Astrocyte of the cerebellum (primary cell): ENCODE measurements at regions of chr7 and their contacts with region 1.

Region 1: GRCh38 chr7:135035252-135035651 is 48.9 kb downstream of the AGBL3 start:
- DNase-seq: no peak
- H3K4me3 ChIP-seq: no peak overlapping the region
- CTCF ChIP-seq: no peak

Region 2: GRCh38 chr7:134985894-134986362 is 49.3 kb before region 1 on chr7:
- in situ Hi-C with region 1: no loop called
- DNase-seq: no peak
- H3K4me3 ChIP-seq: peak overlapping the region; percentile 82
- CTCF ChIP-seq: peak; percentile 13

Region 3: GRCh38 chr7:134996097-134996550 is 39.1 kb before region 1 on chr7:
- in situ Hi-C with region 1: loop called (anchors 5 kb)
- DNase-seq: peak; percentile 37
- H3K4me3 ChIP-seq: no peak overlapping the region
- CTCF ChIP-seq: no peak